ENCODE measurements at regions of chr3 and their contacts with region 1.

Region 1: DNA sequence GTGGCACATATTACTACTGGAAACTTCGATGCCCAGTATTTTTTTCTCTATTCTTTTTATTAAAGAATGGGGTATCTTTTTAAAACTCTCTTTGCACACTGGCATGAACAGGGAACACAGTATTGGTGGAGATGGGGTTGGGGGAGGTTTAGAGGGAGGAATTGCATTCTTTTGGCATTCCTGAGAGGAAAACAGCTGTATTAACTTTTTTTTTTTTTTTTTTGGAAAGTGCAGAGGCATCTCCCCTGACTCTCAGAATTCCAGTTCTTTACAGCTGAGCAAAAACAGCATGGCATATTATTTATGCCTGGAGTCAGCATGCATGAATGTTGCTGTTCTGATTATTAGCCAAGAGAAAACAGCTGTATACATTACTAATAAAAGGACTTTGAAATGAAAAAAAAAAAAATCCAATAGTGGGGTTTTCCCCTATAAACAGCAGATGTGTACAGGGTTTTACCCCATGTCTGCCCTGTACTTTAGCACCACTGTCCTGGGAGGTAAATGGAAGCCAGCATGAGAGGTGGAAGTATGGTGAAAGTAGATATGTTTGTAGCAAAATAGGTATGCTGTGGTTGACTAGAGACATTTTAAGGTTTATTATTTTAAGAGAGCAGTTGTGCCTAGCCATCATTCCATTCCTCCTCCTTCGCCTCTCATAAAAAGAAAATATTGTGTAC is 132.2 kb downstream of the FNDC3B start:
- DNase-seq: no peak
- H3K4me3 ChIP-seq: no peak overlapping the region
- H3K27ac ChIP-seq: peak overlapping the region; percentile 9; the same call in 1 of the 2 replicates
- H3K4me1 ChIP-seq: peaks cover 77% of the 10 kb centered on the region
- H3K27me3 ChIP-seq: no peaks in the 10 kb centered on the region
- CTCF ChIP-seq: no peak

Region 2: DNA sequence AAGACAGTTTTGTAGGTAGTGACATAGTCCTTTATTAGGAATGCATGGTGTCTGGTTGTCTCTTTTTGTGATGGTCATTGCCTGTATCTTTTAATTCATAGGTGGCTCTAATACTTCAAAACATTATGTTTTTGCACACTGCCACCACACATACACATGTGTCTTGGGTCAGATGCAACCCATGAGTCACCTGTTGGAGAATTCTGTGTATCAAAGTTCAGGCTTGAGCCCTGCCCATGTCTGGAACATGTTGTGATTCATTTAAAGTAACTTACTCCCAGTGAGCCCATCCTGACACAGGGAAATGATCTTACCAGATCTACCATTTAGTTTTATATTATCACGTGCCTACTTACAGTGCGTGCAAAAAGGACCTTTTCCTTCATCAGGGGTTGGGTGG is 134.0 kb after region 1 on chr3:
- CTCF ChIA-PET with region 1: no interaction called
- POLR2A ChIA-PET with region 1: no interaction called
- intact Hi-C with region 1: loop called (anchors 1 kb)
- DNase-seq: peak in 1 of 2 experiments; percentile 87
- H3K4me3 ChIP-seq: 0 out of 2 replicates have a peak overlapping the region, but pooled peaks have one; percentile 2
- H3K27ac ChIP-seq: peak overlapping the region; percentile 78
- H3K4me1 ChIP-seq: peaks cover 46% of the 10 kb centered on the region
- H3K27me3 ChIP-seq: no peaks in the 10 kb centered on the region
- CTCF ChIP-seq: no peak

Measured in PC-9 (cell line).